ENCODE measurements at regions of chr6 and their contacts with region 1.

Region 1: DNA sequence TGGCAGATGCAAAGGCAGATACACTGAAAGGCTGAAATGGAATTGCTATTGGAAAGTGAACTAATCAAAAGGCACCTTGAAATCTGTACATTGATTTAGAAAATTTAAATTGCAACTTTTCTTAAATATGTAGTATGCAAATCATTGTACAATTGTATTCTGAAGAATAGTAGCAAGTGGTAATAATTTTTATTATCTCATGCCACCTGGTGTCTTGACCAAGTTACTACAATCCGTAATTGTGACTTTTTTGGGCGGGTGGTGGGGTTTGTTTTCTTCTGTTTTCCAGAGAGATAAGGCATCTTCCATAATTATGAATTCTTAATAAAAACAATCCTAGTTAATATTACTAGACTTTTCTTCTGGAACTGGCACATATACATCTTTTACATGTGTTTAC is 12.5 kb upstream of the BCKDHB start:
- DNase-seq: no peak
- ATAC-seq: no peak
- H3K4me3 ChIP-seq: no peak overlapping the region
- H3K27ac ChIP-seq: no peak overlapping the region
- H3K4me1 ChIP-seq: no peaks in the 10 kb centered on the region
- H3K27me3 ChIP-seq: no peaks in the 10 kb centered on the region
- CTCF ChIP-seq: peak in 11 of 12 donors; percentile 33 to 63 (median 43)
- POLR2A ChIP-seq: no peak

Region 2: DNA sequence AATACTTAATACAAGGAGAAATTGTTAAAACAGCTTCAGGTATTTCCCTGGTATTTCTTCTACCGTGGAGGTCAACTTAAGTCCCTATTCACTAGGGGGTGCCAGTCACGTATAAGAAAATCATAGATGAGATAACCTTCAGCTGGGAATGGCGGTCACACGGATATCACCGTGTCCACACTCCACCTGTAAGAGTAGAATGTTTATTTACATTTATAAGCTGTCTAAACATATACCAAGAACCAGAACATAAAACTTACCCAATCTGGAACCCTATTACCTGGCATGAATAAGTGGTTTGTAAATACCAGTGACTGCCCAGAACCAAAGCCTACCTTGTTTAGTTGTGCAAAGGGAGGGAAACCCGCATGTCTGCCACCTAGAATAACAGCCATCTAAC is 144.8 kb before region 1 on chr6:
- intact Hi-C with region 1: loop called in 7 of 10 experiments (anchors 5 to 10 kb)
- DNase-seq: peak in 1 of 5 donors; percentile 24
- ATAC-seq: no peak
- H3K4me3 ChIP-seq: no peak overlapping the region
- H3K27ac ChIP-seq: no peak overlapping the region
- H3K4me1 ChIP-seq: peaks cover 0 to 17% (median 7%) of the 10 kb centered on the region in 12 donors
- H3K27me3 ChIP-seq: peaks cover 4 to 44% (median 24%) of the 10 kb centered on the region in 9 donors
- CTCF ChIP-seq: peak; percentile 14 to 54 (median 33)
- POLR2A ChIP-seq: no peak

Region 3: GRCh38 chr6:80223743-80224212 is 129.8 kb after region 1 on chr6:
- intact Hi-C with region 1: no loop called
- DNase-seq: peak in 2 of 5 donors; percentile 34 to 36
- ATAC-seq: peak in 2 of 4 donors; percentile 51 to 74
- H3K4me3 ChIP-seq: no peak overlapping the region
- H3K27ac ChIP-seq: no peak overlapping the region
- H3K4me1 ChIP-seq: no peaks in the 10 kb centered on the region
- H3K27me3 ChIP-seq: no peaks in the 10 kb centered on the region
- CTCF ChIP-seq: no peak
- POLR2A ChIP-seq: no peak

Measured in heart left ventricle (tissue), 16 donors.